Activated B cell treated with CpG ODN at 0.5 μM for 24 hours (primary cell): ENCODE measurements at regions of chr12 and their contacts with region 1.

Region 1: DNA sequence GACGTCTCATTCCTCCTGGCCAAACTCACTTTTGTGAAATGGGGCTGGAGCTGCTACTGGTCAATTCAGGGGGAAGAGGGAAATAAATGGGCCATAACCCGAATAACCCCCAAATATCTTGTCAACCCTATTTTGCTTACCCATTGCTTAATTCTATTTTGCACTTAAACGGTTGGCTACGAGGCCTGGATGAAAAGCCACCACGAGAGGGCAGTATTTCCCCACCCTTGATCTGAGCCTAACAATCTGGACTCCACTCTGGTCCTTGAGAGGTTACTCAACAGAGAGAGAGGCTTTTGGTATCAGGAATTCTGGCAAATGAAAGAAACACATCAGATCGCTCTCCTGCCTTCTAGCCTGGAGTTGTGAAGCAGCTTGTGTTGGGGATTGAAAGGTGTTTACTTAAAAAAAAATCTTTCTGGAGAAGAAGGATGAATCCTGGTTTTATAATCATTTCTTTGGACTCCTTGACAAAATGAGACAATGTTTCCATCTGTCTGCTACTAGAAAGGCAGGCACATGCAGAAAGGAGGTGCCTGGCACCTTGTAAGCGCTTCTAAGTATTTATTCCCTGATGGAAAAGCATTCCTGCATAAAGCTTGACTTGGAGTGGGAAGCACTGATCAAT is 22.4 kb upstream of the FBXO21 start:
- DNase-seq: peak; percentile 26
- ATAC-seq: peak; percentile 54
- H3K4me3 Mint-ChIP-seq: no peak overlapping the region
- H3K27ac Mint-ChIP-seq: no peak overlapping the region
- H3K4me1 Mint-ChIP-seq: no peaks in the 10 kb centered on the region
- H3K27me3 Mint-ChIP-seq: peaks cover 24% of the 10 kb centered on the region
- CTCF ChIP-seq: peak; percentile 92

Region 2: GRCh38 chr12:117025481-117026151 is 187.1 kb before region 1 on chr12:
- CTCF ChIA-PET with region 1: no interaction called
- POLR2A ChIA-PET with region 1: no interaction called
- intact Hi-C with region 1: loop called (anchors 1 kb)
- DNase-seq: peak; percentile 29
- ATAC-seq: peak; percentile 73
- H3K4me3 Mint-ChIP-seq: no peak overlapping the region
- H3K27ac Mint-ChIP-seq: no peak overlapping the region
- H3K4me1 Mint-ChIP-seq: peaks cover 5% of the 10 kb centered on the region
- H3K27me3 Mint-ChIP-seq: no peaks in the 10 kb centered on the region
- CTCF ChIP-seq: peak; percentile 61

Region 3: GRCh38 chr12:117466677-117467362 is 254.1 kb after region 1 on chr12:
- CTCF ChIA-PET with region 1: no interaction called
- POLR2A ChIA-PET with region 1: no interaction called
- intact Hi-C with region 1: no loop called
- DNase-seq: no peak
- ATAC-seq: no peak
- H3K4me3 Mint-ChIP-seq: no peak overlapping the region
- H3K27ac Mint-ChIP-seq: no peak overlapping the region
- H3K4me1 Mint-ChIP-seq: no peaks in the 10 kb centered on the region
- H3K27me3 Mint-ChIP-seq: no peaks in the 10 kb centered on the region
- CTCF ChIP-seq: no peak

Region 4: GRCh38 chr12:117587631-117588287 is 375.1 kb after region 1 on chr12:
- CTCF ChIA-PET with region 1: no interaction called
- POLR2A ChIA-PET with region 1: no interaction called
- intact Hi-C with region 1: loop called (anchors 1 kb)
- DNase-seq: peak; percentile 15
- ATAC-seq: no peak
- H3K4me3 Mint-ChIP-seq: no peak overlapping the region
- H3K27ac Mint-ChIP-seq: no peak overlapping the region
- H3K4me1 Mint-ChIP-seq: no peaks in the 10 kb centered on the region
- H3K27me3 Mint-ChIP-seq: peaks cover 15% of the 10 kb centered on the region
- CTCF ChIP-seq: no peak

Region 5: GRCh38 chr12:117836999-117837736 is 624.5 kb after region 1 on chr12:
- CTCF ChIA-PET with region 1: no interaction called
- POLR2A ChIA-PET with region 1: no interaction called
- intact Hi-C with region 1: loop called (anchors 1 kb)
- DNase-seq: peak; percentile 53
- ATAC-seq: peak; percentile 37
- H3K4me3 Mint-ChIP-seq: no peak overlapping the region
- H3K27ac Mint-ChIP-seq: no peak overlapping the region
- H3K4me1 Mint-ChIP-seq: peaks cover 3% of the 10 kb centered on the region
- H3K27me3 Mint-ChIP-seq: peaks cover 10% of the 10 kb centered on the region
- CTCF ChIP-seq: peak; percentile 58

Region 6: GRCh38 chr12:117850048-117850447 is 637.4 kb after region 1 on chr12:
- CTCF ChIA-PET with region 1: interaction called, 3 read pairs
- POLR2A ChIA-PET with region 1: interaction called, 5 read pairs
- intact Hi-C with region 1: loop called (anchors 1 kb)
- DNase-seq: no peak
- ATAC-seq: no peak
- H3K4me3 Mint-ChIP-seq: no peak overlapping the region
- H3K27ac Mint-ChIP-seq: no peak overlapping the region
- H3K4me1 Mint-ChIP-seq: no peaks in the 10 kb centered on the region
- H3K27me3 Mint-ChIP-seq: peaks cover 13% of the 10 kb centered on the region
- CTCF ChIP-seq: no peak

Region 7: DNA sequence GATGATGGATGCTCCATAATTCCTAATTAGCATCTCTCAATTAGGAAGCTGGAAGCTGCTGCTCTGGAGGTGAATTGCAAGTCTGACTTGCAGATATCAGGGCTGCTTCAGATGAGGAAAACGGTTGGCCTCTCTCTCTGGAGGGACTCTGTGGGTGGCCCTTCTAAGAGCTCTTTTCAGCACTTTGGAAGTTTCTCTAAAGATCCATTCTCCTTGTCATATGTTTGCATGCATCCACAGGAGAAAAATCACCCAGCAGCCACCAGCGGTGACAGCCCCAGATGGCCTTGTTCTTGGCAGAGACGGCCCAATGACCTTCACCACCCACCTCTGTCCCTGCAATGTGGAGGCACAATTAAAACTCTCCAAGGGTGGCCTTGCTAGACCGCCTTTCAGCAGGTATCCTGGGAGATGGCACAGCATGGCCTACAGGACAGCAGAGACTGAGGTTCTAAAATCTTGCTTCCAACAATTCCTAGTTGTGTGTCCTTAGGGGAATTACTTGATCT is 713.8 kb after region 1 on chr12:
- CTCF ChIA-PET with region 1: no interaction called
- POLR2A ChIA-PET with region 1: no interaction called
- intact Hi-C with region 1: no loop called
- DNase-seq: no peak
- ATAC-seq: no peak
- H3K4me3 Mint-ChIP-seq: no peak overlapping the region
- H3K27ac Mint-ChIP-seq: no peak overlapping the region
- H3K4me1 Mint-ChIP-seq: no peaks in the 10 kb centered on the region
- H3K27me3 Mint-ChIP-seq: peaks cover 7% of the 10 kb centered on the region
- CTCF ChIP-seq: no peak